ENCODE measurements at regions of chr2 and their contacts with region 1.

Region 1: GRCh38 chr2:219836647-219837177 is 209.3 kb downstream of the SLC4A3 start:
- DNase-seq: no peak
- ATAC-seq: 0 out of 2 replicates have a peak, but pooled peaks have one; percentile 66
- H3K4me3 ChIP-seq: no peak overlapping the region
- H3K27ac ChIP-seq: no peak overlapping the region
- H3K4me1 ChIP-seq: no peaks in the 10 kb centered on the region
- H3K27me3 ChIP-seq: no peaks in the 10 kb centered on the region
- CTCF ChIP-seq: peak; percentile 78

Region 2: DNA sequence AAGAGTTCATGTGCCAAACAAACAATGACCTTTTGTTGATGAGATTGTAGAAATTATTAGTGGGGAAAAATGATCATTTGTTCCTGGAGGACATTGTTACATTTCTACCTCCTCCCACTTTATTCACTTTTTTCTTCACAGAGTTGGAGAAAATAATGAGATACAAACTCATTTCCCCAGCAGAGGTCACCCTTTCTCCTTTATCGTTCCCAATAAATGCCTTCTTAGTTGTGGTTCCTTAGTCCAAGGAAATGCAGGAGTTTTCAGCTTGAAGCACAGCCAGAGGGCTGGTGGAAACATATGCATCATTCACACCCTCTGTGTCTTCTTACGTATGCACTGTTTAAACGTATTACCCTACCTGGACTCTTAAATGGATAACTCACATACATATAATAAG is 100.5 kb before region 1 on chr2:
- CTCF ChIA-PET with region 1: interaction called, 4 read pairs
- POLR2A ChIA-PET with region 1: no interaction called
- in situ Hi-C with region 1: no loop called
- intact Hi-C with region 1: loop called (anchors 5 kb)
- DNase-seq: peak; percentile 15
- ATAC-seq: peak; percentile 71
- H3K4me3 ChIP-seq: no peak overlapping the region
- H3K27ac ChIP-seq: no peak overlapping the region
- H3K4me1 ChIP-seq: no peaks in the 10 kb centered on the region
- H3K27me3 ChIP-seq: 0 out of 2 replicates have a peak, but pooled peaks cover 2% of the 10 kb centered on the region
- CTCF ChIP-seq: peak; percentile 59; the same call in 1 of the 2 replicates

Region 3: DNA sequence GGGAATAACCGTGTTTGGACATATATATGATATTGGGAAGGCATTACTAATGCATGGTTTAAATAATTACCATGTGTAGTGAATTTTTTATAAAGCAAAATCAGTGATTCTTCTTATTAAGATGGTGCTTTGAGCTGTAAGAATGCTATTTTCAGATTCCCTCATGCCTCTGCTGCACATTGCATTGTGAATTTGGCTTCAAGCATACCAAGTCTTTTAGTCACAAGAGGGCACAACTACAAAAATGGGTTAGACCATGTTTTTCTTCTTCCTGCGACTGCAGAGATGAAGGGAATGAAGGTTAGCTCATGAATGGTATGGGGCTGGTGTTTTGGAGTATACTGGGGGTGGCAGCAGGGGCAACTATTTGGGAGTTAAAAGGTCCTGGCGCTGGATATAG is 110.9 kb after region 1 on chr2:
- CTCF ChIA-PET with region 1: no interaction called
- POLR2A ChIA-PET with region 1: no interaction called
- in situ Hi-C with region 1: no loop called
- intact Hi-C with region 1: no loop called
- DNase-seq: no peak
- ATAC-seq: no peak
- H3K4me3 ChIP-seq: no peak overlapping the region
- H3K27ac ChIP-seq: no peak overlapping the region
- H3K4me1 ChIP-seq: no peaks in the 10 kb centered on the region
- H3K27me3 ChIP-seq: no peaks in the 10 kb centered on the region
- CTCF ChIP-seq: no peak

Region 4: DNA sequence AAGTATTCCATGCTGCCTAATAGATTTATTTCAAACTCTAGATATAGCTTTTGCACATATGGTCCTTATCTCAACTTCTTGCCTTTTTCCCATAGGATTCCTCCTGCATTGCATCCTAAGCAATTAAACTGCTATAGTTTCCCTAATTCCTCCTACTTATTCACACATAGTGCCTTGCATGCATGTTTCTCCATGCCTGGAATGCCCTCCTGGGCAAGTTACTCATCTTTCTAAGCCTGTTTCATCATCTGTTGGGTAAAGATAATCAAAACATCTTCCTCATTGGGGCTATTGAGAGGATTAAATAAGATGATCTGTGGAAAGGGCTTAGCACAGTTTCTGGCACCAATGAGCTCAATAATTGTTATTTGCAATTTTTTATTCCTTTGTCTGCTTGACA is 517.2 kb after region 1 on chr2:
- CTCF ChIA-PET with region 1: no interaction called
- POLR2A ChIA-PET with region 1: no interaction called
- in situ Hi-C with region 1: no loop called
- intact Hi-C with region 1: no loop called
- DNase-seq: no peak
- ATAC-seq: no peak
- H3K4me3 ChIP-seq: no peak overlapping the region
- H3K27ac ChIP-seq: no peak overlapping the region
- H3K4me1 ChIP-seq: no peaks in the 10 kb centered on the region
- H3K27me3 ChIP-seq: no peaks in the 10 kb centered on the region
- CTCF ChIP-seq: no peak